ENCODE measurements at regions of chr6 and their contacts with region 1.

Region 1: DNA sequence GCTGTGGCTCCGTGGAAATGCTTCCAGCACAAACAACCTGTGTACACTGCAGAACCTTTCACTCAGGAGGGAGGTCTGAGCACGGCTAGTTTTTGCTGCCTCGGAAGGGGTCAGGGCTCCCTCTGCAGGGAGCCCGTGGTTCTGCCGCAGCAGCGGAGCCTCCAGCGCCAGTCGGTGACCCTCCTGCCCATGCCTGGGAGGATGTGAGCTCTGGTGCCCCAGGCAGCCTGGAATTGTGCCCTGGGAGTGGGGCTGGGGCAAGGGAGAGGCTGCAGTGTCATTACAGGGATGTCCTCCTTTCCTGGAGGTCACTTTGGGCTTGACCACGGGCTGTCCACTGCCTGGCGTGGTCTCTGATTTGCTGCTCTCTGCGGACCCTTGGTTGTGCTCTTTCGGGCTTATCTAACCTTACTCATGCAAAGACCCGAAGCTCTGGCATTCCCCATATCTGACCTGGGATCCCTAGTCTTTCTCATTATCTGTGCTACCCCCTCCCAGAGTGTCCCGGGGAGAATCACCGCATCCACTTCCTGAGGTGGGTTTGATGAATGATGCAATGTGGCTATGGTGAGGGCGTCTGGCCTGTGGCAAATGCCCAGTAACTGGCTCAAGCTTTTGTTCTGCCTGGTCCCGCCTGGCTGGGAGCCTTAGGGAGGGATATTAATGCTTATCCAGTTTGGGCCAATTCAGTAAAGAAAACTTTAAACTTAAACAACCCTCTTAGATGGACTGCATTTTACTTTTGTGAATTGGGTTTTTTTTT is 59.6 kb upstream of the TAGAP start:
- DNase-seq: peak; percentile 72
- ATAC-seq: peak; percentile 92

Region 2: DNA sequence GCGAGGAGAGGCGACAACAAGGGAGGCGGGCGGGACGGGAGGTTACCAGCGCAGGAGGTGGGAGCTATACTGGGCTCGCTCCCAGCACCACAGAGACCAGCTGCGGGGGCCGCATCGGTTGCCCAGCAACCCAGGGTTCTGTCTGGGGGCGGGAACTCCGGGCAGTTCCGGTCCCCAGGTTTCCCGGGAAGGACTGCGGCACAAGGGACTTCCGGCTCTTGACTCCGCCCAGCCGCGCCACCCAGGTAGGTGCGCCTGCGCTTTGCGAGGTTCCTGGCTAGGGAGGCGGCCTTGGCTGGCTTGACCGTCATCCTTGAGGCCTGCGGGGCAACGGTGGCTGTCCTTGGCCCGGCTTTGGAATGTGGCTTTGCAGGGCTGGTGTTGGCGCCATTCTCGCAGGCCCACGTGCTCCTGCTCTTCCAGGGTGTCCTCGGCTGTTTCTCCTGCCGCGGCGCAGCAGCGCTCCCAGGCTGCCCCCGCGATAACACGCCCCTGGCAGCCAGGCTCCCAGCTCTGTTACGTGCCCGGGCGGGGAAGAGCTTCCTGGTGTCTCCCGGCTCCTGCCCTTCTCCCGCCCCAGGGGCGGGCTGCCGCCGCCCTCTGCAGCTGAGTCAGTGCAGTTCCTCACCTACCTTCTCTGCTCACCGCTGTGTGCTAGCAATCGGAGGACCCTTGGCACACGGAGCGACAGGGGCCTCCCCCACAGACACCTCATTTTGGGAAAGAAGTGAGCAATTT is 104.5 kb before region 1 on chr6 and contains the start of gene RSPH3:
- intact Hi-C with region 1: loop called (anchors 10 kb)
- DNase-seq: peak; percentile 95
- ATAC-seq: peak; percentile 96
- total RNA-seq, gene RSPH3: 12.1 TPM

Region 3: GRCh38 chr6:159042003-159042825 is 62.1 kb before region 1 on chr6:
- intact Hi-C with region 1: loop called (anchors 10 kb)
- DNase-seq: peak; percentile 43
- ATAC-seq: peak; percentile 82